ENCODE measurements at regions of chrX and their contacts with region 1.

Region 1: DNA sequence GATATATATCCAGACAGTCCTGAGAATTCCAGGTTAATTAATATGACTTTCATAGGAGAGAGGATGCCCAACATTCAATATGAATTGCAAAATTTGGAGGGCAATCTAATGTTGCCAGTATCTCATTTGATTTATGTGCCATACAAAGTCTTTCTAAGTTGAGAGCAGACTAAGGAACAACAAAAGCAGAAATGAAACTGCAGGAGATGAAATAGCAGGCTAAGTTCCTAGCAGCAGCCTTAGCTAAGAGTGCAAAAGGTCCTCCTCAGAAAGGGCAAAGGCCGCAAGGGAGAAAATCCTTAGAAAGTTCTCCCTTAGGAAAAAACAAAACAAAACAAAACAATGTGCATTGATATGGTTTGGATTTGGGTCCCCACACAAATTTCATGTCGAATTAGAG is 602.9 kb upstream of the HTR2C start:
- DNase-seq: no peak
- ATAC-seq: no peak
- H3K4me3 ChIP-seq: no peak overlapping the region
- H3K27ac ChIP-seq: no peak overlapping the region
- H3K4me1 ChIP-seq: no peaks in the 10 kb centered on the region
- H3K27me3 ChIP-seq: peaks cover 0 to 2% (median 0%) of the 10 kb centered on the region in 3 donors
- CTCF ChIP-seq: no peak

Region 2: GRCh38 chrX:113793521-113794012 is 187.4 kb before region 1 on chrX:
- intact Hi-C with region 1: no loop called
- DNase-seq: no peak
- ATAC-seq: no peak
- H3K4me3 ChIP-seq: no peak overlapping the region
- H3K27ac ChIP-seq: no peak overlapping the region
- H3K4me1 ChIP-seq: no peaks in the 10 kb centered on the region
- H3K27me3 ChIP-seq: peaks cover 0 to 3% (median 0%) of the 10 kb centered on the region in 3 donors
- CTCF ChIP-seq: no peak

Region 3: GRCh38 chrX:113929004-113929403 is 51.9 kb before region 1 on chrX:
- intact Hi-C with region 1: loop called in 1 of 2 experiments (anchors 10 kb)
- DNase-seq: no peak
- ATAC-seq: no peak
- H3K4me3 ChIP-seq: no peak overlapping the region
- H3K27ac ChIP-seq: no peak overlapping the region
- H3K4me1 ChIP-seq: no peaks in the 10 kb centered on the region
- H3K27me3 ChIP-seq: peaks cover 0 to 11% (median 0%) of the 10 kb centered on the region in 3 donors
- CTCF ChIP-seq: no peak

Measured in psoas muscle (tissue), 8 donors.